ENCODE measurements at regions of chr18 and their contacts with region 1.

Region 1: DNA sequence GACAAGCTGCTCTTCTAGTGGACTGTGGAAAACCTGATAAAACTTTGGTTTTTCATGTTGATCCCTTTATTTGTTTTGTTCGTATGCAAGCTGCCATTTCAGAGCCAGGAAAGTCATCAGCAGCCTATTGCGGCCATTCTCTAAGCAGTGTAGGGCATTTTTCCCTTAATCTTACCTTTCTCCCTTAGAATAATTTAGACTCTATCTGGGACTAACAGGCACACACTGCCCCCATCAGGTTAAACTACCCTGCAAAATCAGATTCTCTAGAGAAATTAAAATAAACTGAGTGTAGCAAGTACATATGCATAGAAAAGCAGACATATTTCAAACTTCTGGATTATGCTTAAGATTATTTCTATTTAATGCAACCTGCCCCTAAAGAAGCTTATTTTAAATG is 347.5 kb downstream of the METTL4 start:
- DNase-seq: peak; percentile 63
- H3K4me3 Mint-ChIP-seq: peak overlapping the region; percentile 43
- H3K27ac Mint-ChIP-seq: no peak overlapping the region
- H3K4me1 Mint-ChIP-seq: peaks cover 15% of the 10 kb centered on the region
- H3K27me3 Mint-ChIP-seq: no peaks in the 10 kb centered on the region
- CTCF ChIP-seq: peak; percentile 76

Region 2: DNA sequence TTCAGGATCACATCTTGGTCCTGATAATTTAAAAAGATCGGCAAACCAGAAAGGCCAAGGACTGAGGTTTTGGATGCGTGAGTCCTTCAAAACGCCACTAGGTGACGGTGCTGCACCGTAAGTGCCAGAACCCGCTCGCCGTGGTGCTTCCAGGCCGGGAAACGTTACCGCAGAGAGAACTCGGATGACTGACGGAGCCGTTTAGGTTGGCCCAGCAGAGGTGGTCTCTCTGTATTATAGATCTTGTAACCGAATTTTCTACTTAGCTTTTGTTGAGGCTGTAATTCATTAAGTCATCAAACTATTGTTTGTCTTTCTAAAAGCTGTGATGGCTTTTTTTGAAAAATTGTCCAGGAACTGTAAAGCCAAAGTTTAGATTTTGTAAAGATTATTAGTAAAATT is 1359.0 kb before region 1 on chr18:
- CTCF ChIA-PET with region 1: interaction called, 3 read pairs
- POLR2A ChIA-PET with region 1: no interaction called
- intact Hi-C with region 1: loop called (anchors 1 kb)
- DNase-seq: peak; percentile 78
- H3K4me3 Mint-ChIP-seq: no peak overlapping the region
- H3K27ac Mint-ChIP-seq: no peak overlapping the region
- H3K4me1 Mint-ChIP-seq: no peaks in the 10 kb centered on the region
- H3K27me3 Mint-ChIP-seq: no peaks in the 10 kb centered on the region
- CTCF ChIP-seq: peak; percentile 99

Region 3: DNA sequence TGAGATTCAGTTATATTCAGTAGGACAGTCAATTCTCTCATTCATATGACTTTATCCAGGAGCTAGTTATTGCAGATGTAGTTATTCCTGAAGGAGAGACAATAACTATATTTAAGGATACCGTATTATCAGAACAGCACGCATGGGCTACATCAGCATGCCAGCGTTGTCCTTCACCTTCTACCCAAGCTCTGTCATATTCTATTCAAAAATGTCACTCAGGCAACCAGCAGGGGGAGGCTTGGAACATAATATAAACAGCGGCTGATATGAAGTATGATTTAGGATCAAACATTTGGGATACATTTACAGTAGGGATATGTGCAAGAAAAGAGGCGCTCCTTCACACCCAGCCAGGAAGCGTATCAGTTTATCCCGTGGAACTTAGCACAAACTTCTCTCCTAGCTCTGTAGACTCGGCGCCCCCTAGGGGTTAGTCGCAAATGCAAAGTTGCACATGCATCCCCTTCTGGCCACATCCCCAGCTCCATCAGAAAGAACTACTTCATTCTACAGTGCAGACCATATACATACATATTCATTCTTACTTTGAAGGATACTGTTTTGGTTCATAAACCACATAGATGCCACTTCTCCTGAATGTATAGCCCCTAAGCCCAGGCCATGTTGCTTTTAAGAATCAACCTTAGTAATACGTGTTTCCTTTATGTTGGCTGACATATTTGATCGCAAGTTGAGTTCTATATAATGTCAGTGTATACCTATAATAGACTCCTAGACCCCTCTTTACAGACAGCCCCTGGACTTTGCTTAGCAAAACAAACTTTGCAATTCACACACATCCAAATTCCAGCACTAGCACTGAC is 559.8 kb before region 1 on chr18:
- CTCF ChIA-PET with region 1: interaction called, 19 read pairs
- POLR2A ChIA-PET with region 1: interaction called, 3 read pairs
- intact Hi-C with region 1: loop called (anchors 2 kb)
- DNase-seq: peak; percentile 70
- H3K4me3 Mint-ChIP-seq: no peak overlapping the region
- H3K27ac Mint-ChIP-seq: no peak overlapping the region
- H3K4me1 Mint-ChIP-seq: peaks cover 6% of the 10 kb centered on the region
- H3K27me3 Mint-ChIP-seq: no peaks in the 10 kb centered on the region
- CTCF ChIP-seq: peak; percentile 64

Region 4: DNA sequence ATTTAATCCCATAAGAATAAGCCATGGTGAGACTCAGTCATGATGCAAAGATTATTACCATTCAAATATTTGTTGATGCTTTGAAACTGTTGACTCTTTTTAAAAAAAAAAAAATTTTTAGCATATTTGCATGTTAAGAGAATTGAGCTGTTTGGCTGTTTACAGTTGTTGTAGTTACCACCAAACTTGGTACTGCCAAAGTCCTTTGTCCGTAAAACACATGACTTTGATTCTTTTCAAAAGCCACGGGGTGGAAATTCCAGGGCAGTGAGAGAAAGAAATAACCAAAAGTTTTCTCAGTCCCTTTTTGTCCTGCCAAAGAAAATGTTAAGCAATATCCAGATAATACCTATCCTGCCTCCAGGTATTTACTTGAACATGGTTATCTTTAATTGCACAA is 127.3 kb before region 1 on chr18:
- CTCF ChIA-PET with region 1: interaction called, 10 read pairs
- POLR2A ChIA-PET with region 1: interaction called, 3 read pairs
- intact Hi-C with region 1: no loop called
- DNase-seq: no peak
- H3K4me3 Mint-ChIP-seq: no peak overlapping the region
- H3K27ac Mint-ChIP-seq: no peak overlapping the region
- H3K4me1 Mint-ChIP-seq: peaks cover 9% of the 10 kb centered on the region
- H3K27me3 Mint-ChIP-seq: no peaks in the 10 kb centered on the region
- CTCF ChIP-seq: no peak

Region 5: GRCh38 chr18:2111456-2111855 is 112.4 kb before region 1 on chr18:
- CTCF ChIA-PET with region 1: interaction called, 166 read pairs
- POLR2A ChIA-PET with region 1: no interaction called
- intact Hi-C with region 1: no loop called
- DNase-seq: peak; percentile 36
- H3K4me3 Mint-ChIP-seq: peak overlapping the region; percentile 3
- H3K27ac Mint-ChIP-seq: peak overlapping the region; percentile 83
- H3K4me1 Mint-ChIP-seq: peaks cover 26% of the 10 kb centered on the region
- H3K27me3 Mint-ChIP-seq: no peaks in the 10 kb centered on the region
- CTCF ChIP-seq: no peak

Region 6: DNA sequence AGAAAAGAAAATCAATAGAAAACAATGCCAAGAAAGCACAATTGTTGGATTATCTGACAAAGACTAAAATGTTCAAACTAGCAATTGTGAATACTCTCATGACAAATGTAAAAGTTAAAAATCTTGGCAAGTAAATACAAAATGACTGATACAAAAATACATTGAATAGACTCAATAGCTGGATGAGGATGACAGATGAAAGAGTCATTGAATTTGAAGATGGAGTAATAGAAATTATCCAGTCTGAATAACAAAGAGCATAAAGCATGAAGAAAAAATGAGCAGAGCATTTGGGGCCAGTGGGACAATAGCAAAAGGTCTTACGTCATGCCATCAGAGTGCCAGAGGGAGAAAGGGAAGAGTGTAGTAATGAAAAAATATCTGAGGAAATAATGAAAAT is 11.0 kb before region 1 on chr18:
- CTCF ChIA-PET with region 1: interaction called, 11 read pairs
- POLR2A ChIA-PET with region 1: no interaction called
- intact Hi-C with region 1: no loop called
- DNase-seq: no peak
- H3K4me3 Mint-ChIP-seq: no peak overlapping the region
- H3K27ac Mint-ChIP-seq: no peak overlapping the region
- H3K4me1 Mint-ChIP-seq: no peaks in the 10 kb centered on the region
- H3K27me3 Mint-ChIP-seq: no peaks in the 10 kb centered on the region
- CTCF ChIP-seq: no peak

Region 7: DNA sequence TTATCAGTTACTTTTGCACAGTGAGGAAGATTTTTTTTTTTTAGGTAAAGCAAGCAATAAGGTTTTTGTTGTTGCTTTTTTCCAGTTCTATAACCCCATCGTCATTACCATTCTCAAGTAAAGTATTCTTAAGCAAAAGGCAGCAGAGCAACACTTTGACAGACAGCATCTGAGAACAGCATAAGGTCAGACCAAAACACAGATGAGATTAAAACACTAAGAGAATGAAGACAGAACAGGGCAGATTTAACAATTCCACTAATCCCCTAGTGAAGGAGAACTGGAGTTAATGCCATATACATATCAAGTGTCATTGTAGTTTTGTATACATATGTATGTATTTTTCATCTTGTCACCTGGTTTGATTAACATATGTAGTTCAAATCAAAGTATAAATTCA is 57.2 kb after region 1 on chr18:
- CTCF ChIA-PET with region 1: no interaction called
- POLR2A ChIA-PET with region 1: no interaction called
- intact Hi-C with region 1: no loop called
- DNase-seq: no peak
- H3K4me3 Mint-ChIP-seq: no peak overlapping the region
- H3K27ac Mint-ChIP-seq: no peak overlapping the region
- H3K4me1 Mint-ChIP-seq: no peaks in the 10 kb centered on the region
- H3K27me3 Mint-ChIP-seq: no peaks in the 10 kb centered on the region
- CTCF ChIP-seq: no peak

Region 8: DNA sequence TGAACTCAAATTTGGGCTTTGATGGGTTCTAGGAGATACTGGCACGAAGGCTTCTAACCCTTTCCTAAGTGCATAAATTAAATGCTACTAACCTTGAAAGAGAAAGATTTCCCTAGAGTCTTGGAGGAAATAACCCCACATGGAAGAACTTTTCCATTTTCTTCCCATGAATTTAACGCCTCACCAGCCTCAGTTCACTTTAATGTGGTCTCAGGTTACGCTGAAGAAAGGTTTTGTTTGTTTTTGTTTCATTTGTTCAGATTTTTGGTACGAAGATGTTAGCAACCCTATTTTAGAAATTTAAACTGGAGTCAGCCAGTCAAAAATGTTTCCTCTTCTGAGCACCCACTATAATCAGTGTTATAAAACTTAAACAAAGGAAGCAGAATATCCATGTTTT is 316.7 kb after region 1 on chr18:
- CTCF ChIA-PET with region 1: interaction called, 29 read pairs
- POLR2A ChIA-PET with region 1: no interaction called
- intact Hi-C with region 1: loop called (anchors 2 kb)
- DNase-seq: no peak
- H3K4me3 Mint-ChIP-seq: no peak overlapping the region
- H3K27ac Mint-ChIP-seq: no peak overlapping the region
- H3K4me1 Mint-ChIP-seq: no peaks in the 10 kb centered on the region
- H3K27me3 Mint-ChIP-seq: no peaks in the 10 kb centered on the region
- CTCF ChIP-seq: no peak

Measured in MCF 10A (cell line).